BJ (cell line): ENCODE measurements at regions of chr1 and their contacts with region 1.

Region 1: GRCh38 chr1:153465811-153466636 is 5.6 kb upstream of the S100A7 start:
- DNase-seq: no peak
- H3K4me3 ChIP-seq: no peak overlapping the region
- H3K27me3 ChIP-seq: peaks cover 2% of the 10 kb centered on the region; the same call in 1 of the 2 replicates
- CTCF ChIP-seq: peak; percentile 82

Region 2: DNA sequence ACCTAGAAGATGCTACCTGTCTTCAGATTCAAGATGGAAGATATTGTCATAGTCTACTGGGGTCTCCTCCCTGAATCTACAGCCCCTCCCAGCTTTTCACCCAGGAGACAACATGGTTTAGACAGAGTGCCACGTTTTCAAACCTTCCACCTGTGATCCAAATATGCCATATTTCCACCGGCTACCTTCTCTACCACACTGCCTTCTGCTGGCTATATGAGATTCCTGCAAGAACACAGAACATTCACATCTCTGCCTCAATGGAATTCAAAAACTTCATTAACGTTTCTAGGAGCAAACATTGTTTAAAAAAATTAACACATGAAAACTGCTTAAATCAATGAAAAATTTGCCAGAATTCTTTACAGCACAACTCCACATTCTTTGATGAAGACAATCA is 275.7 kb before region 1 on chr1:
- CTCF ChIA-PET with region 1: no interaction called
- POLR2A ChIA-PET with region 1: no interaction called
- DNase-seq: no peak
- H3K4me3 ChIP-seq: no peak overlapping the region
- H3K27me3 ChIP-seq: no peaks in the 10 kb centered on the region
- CTCF ChIP-seq: no peak

Region 3: GRCh38 chr1:153478692-153479618 is 12.9 kb after region 1 on chr1:
- CTCF ChIA-PET with region 1: interaction called, 16 read pairs
- POLR2A ChIA-PET with region 1: no interaction called
- DNase-seq: no peak
- H3K4me3 ChIP-seq: no peak overlapping the region
- H3K27me3 ChIP-seq: peaks cover 11% of the 10 kb centered on the region
- CTCF ChIP-seq: no peak

Region 4: GRCh38 chr1:153485863-153486262 is 19.8 kb after region 1 on chr1:
- CTCF ChIA-PET with region 1: interaction called, 18 read pairs
- POLR2A ChIA-PET with region 1: no interaction called
- DNase-seq: no peak
- H3K4me3 ChIP-seq: no peak overlapping the region
- H3K27me3 ChIP-seq: peaks cover 9% of the 10 kb centered on the region
- CTCF ChIP-seq: no peak